ENCODE measurements at regions of chr17 and their contacts with region 1.

Region 1: DNA sequence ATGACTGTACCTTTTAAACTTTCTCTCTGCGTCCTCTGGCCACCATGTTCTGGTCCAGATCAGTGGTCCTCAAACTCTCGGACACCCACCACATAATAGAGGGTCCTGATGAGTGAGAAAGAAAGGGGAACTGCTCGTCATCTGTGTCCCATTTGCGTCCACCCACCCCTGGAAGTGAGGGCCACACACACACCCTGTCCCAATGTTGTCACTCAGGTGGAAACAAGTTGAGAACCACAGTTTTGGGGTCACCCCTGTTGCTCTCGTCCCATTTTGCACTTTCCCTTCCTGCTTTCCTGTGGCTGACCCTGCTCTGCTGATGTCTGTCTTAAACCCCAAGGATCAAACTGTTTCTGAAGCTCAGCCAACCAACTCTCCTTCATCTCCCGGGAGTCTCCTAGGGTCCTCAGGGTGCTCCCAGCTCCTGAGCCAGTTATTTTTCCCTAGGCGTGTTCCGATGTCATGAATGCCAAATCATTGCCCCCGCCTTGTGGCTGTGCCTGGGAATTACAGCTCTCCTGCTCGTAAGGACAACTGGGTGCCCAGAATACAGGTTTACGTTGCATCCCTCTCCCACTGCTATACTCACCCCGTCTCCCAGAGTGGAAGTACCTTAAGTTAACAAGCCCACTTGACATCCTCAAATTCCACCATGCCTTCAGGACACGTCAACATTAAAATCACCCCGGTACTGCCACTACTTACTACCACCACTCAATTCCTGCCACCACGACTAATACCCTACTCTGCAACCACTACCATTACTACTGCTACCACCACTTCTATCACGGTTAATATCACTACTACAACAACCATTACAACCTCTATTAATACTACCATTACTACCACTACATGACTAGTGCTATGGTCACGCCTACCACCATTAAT is 26.0 kb upstream of the HNF1B start:
- DNase-seq: no peak
- H3K4me3 ChIP-seq: no peak overlapping the region
- H3K27ac ChIP-seq: no peak overlapping the region
- H3K4me1 ChIP-seq: peaks cover 0 to 6% (median 0%) of the 10 kb centered on the region in 3 donors
- H3K27me3 ChIP-seq: peaks cover 0 to 31% (median 0%) of the 10 kb centered on the region in 4 donors
- CTCF ChIP-seq: peak in 5 of 6 experiments; percentile 46 to 81 (median 59)
- POLR2A ChIP-seq: no peak

Region 2: DNA sequence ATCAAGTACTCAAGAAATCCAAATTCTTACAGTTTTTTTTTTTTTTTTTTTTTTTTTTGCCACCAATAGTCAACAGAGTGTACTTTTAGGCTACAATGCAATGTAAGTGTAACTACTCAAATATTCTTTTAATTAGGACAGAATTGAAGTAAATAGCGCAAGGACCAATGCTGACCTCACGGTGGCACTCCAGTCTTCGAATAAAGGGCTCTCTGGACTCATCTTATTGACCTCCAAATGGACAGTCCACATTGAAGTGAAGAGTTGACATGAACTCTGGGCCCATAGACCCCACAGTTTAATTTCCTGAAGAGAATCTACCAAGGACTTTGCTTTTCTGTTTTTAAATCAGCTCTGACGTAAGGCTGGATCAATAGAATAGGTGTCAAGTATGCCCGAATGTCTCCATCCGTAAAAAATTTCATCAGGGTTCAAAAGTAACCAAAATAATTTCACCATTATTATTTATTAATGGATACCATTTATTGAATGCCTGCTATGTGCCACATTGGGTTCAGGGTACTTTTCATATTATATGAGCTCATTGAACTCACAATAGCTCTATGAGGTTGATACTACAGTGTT is 120.4 kb before region 1 on chr17:
- intact Hi-C with region 1: no loop called
- DNase-seq: no peak
- H3K4me3 ChIP-seq: no peak overlapping the region
- H3K27ac ChIP-seq: no peak overlapping the region
- H3K4me1 ChIP-seq: peaks cover 0 to 11% (median 0%) of the 10 kb centered on the region in 3 donors
- H3K27me3 ChIP-seq: peaks cover 0 to 85% (median 0%) of the 10 kb centered on the region in 4 donors
- CTCF ChIP-seq: peak in 1 of 6 experiments; percentile 7
- POLR2A ChIP-seq: no peak

Region 3: DNA sequence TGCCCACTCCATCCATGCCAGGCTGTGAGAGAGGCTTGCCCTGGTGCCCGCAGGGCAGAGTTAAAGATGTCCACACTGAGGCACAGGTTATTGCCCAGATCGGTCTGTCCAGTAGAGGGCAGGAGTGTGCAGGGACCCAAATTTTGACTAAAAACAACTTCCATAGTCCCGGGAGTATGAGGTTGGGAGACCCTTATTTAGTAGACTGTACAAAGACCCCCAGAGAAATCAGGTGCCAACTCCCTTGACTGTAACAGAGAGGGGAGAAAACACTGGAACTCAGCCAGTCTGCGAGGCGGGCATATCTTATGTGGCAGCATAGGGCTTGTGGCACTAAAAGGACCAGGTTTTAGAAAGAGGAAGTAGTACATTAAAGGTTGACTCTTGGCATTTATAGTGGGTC is 69.4 kb before region 1 on chr17:
- intact Hi-C with region 1: loop called (anchors 10 kb)
- DNase-seq: no peak
- H3K4me3 ChIP-seq: no peak overlapping the region
- H3K27ac ChIP-seq: no peak overlapping the region
- H3K4me1 ChIP-seq: no peaks in the 10 kb centered on the region
- H3K27me3 ChIP-seq: peaks cover 0 to 57% (median 0%) of the 10 kb centered on the region in 4 donors
- CTCF ChIP-seq: peak; percentile 31 to 62 (median 51)
- POLR2A ChIP-seq: no peak

Region 4: DNA sequence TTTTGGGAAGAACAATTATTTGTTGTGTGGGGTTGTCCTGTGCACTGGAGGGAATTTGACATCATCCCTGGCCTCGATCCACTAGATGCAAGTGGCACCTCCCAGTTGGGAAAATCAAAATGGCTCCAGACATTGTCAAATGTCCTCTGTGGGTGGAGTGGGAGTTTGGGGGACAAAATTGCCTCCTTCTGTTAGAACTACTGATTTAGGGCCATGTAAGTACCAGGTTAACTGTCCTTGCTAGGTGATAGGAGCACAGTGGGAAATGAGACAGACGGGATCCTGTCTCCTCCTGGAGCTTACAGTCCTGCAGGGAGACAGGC is 714.2 kb after region 1 on chr17:
- intact Hi-C with region 1: no loop called
- DNase-seq: no peak
- H3K4me3 ChIP-seq: no peak overlapping the region
- H3K27ac ChIP-seq: peak overlapping the region; percentile 21 to 85 (median 63)
- H3K4me1 ChIP-seq: peaks cover 10 to 28% (median 14%) of the 10 kb centered on the region in 3 donors
- H3K27me3 ChIP-seq: no peaks in the 10 kb centered on the region
- CTCF ChIP-seq: no peak
- POLR2A ChIP-seq: no peak

Measured in esophagus squamous epithelium (tissue), 5 donors.